GM23248 (cell line): ENCODE measurements at regions of chr4 and their contacts with region 1.

Region 1: GRCh38 chr4:129641179-129641578 is 545.2 kb downstream of the C4orf33 start:
- DNase-seq: peak; percentile 51
- H3K4me3 ChIP-seq: no peak overlapping the region
- H3K27ac ChIP-seq: no peak overlapping the region
- H3K4me1 ChIP-seq: no peaks in the 10 kb centered on the region
- H3K27me3 ChIP-seq: no peaks in the 10 kb centered on the region

Region 2: DNA sequence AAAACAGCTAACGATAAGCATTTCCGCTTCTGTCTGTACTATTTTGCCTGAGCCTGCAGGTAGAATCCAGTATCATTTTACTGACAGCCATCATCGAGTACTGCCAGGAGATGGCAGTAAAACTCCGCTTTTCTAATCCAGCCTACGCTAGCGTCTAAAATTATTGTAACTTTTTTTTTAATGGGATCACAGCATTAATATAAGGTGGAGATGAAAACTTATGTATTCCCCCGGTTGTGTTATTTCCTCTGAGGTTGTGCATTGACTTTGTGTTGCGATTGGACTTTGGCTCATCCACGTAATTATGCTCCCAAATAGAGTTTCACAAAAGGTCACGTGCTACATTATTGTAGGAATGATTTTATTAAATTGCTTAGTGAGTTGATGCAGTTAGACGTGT is 297.1 kb before region 1 on chr4:
- in situ Hi-C with region 1: loop called (anchors 10 kb)
- DNase-seq: peak; percentile 66
- H3K4me3 ChIP-seq: peak overlapping the region; percentile 72
- H3K27ac ChIP-seq: no peak overlapping the region
- H3K4me1 ChIP-seq: peaks cover 17% of the 10 kb centered on the region
- H3K27me3 ChIP-seq: 0 out of 2 replicates have a peak, but pooled peaks cover 6% of the 10 kb centered on the region

Region 3: DNA sequence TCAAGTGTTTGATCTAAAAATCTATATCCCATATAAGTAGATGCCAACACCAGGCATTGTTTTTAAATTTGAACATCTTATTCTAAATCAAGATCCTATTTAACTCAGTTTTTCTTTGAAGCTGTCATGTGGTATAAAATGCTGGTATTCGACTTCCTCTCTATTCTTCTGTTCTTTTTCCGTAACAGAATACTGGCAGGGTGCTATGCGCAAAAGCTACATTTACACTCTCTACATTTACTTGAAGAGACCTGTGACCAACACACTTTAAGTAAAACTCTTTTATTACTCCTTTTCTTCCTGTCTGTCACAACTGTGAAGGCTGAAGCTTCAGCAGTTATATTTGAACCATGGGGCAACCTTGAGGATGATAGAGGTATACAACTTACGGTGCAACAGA is 67.6 kb after region 1 on chr4:
- in situ Hi-C with region 1: no loop called
- DNase-seq: no peak
- H3K4me3 ChIP-seq: no peak overlapping the region
- H3K27ac ChIP-seq: no peak overlapping the region
- H3K4me1 ChIP-seq: no peaks in the 10 kb centered on the region
- H3K27me3 ChIP-seq: no peaks in the 10 kb centered on the region